Panc1 (cell line): ENCODE measurements at regions of chr5 and their contacts with region 1.

Region 1: GRCh38 chr5:174327317-174328236 is 282.1 kb downstream of the NSG2 start:
- DNase-seq: peak; percentile 30
- ATAC-seq: peak; percentile 91
- H3K4me3 ChIP-seq: no peak overlapping the region
- H3K27ac ChIP-seq: no peak overlapping the region
- H3K4me1 ChIP-seq: no peaks in the 10 kb centered on the region
- H3K27me3 ChIP-seq: peaks cover 24% of the 10 kb centered on the region
- CTCF ChIP-seq: peak; percentile 95

Region 2: DNA sequence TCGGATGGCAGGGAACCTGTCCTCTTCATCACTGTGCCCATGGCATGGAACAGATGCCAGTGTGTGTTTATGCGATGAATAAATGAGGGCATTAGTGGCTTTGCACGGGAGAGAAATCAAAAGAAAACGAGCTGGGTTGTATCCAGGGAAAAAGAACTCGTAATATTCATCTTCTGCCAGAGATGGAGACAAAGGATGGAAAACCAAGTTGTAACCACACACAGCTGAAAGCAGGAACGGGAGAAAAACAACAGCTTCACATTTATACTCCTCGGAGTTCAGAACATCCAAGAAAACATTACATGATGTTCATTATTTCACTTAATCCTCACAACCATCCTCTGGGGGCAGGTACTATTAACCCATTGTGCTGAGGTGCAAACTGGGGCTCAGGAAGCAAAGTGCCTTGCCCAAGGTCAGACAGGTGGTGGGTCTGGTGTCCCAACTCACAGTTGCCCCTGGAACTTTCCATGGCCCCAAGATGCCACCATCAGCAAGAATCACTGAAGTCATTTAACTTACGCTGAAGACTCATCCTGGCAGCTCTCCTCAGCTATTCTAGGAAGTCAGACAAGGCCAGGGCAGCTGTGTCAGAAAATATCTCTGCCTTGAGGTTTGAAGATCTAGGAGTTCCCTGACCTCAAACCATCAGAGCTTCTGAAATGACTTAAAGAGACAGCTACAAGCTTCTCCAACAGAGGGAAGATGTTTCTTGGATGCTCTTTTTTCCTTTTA is 31.7 kb before region 1 on chr5:
- CTCF ChIA-PET with region 1: no interaction called
- POLR2A ChIA-PET with region 1: no interaction called
- in situ Hi-C with region 1: no loop called
- intact Hi-C with region 1: no loop called
- DNase-seq: no peak
- ATAC-seq: no peak
- H3K4me3 ChIP-seq: no peak overlapping the region
- H3K27ac ChIP-seq: no peak overlapping the region
- H3K4me1 ChIP-seq: no peaks in the 10 kb centered on the region
- H3K27me3 ChIP-seq: no peaks in the 10 kb centered on the region; the same call in 1 of the 2 replicates
- CTCF ChIP-seq: no peak

Region 3: GRCh38 chr5:174735498-174736330 is 408.1 kb after region 1 on chr5:
- CTCF ChIA-PET with region 1: no interaction called
- POLR2A ChIA-PET with region 1: no interaction called
- in situ Hi-C with region 1: no loop called
- intact Hi-C with region 1: loop called (anchors 1 kb)
- DNase-seq: no peak
- ATAC-seq: peak; percentile 93
- H3K4me3 ChIP-seq: peak overlapping the region; percentile 52 to 89
- H3K27ac ChIP-seq: no peak overlapping the region
- H3K4me1 ChIP-seq: peaks cover 20% of the 10 kb centered on the region
- H3K27me3 ChIP-seq: peaks cover 3% of the 10 kb centered on the region; the same call in 1 of the 2 replicates
- CTCF ChIP-seq: peak; percentile 87

Region 4: DNA sequence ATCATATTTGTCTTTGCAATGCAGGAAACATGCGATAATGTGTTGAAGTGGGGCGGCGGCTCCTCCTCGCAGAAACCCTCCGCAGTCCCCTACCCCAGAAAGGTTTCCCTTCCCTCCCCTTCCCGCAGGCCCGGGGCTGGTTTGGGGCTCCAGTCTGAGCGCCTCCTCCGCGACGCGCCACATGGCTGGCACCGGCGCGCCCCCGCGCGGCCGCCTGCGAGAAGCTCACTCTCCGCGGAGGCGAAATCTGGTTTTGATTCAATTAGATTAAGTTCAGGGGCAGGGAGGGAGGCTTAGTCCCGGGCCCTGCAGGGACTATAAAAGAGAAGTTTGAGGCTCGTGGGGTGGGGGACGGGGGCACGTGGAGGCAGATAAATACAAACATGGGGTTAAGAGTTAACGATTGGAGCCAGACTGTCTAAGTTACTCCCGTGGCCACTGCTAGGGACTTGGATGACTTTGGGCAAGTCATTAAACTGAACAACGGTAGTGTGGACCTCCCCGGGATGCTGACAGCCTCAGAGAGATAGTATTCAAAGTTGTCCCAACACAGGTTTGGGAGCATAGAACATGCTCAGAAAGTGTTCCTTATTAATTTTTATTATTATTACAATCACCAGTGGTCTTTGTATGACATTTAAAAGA is 466.2 kb after region 1 on chr5:
- CTCF ChIA-PET with region 1: no interaction called
- POLR2A ChIA-PET with region 1: no interaction called
- in situ Hi-C with region 1: no loop called
- intact Hi-C with region 1: loop called (anchors 2 kb)
- DNase-seq: peak; percentile 17
- ATAC-seq: peak; percentile 96
- H3K4me3 ChIP-seq: peak overlapping the region in 1 of 2 experiments; percentile 35; a peak in 2 of 4 replicates
- H3K27ac ChIP-seq: no peak overlapping the region
- H3K4me1 ChIP-seq: no peaks in the 10 kb centered on the region; the same call in 1 of the 2 replicates
- H3K27me3 ChIP-seq: peaks cover 5% of the 10 kb centered on the region; the same call in 1 of the 2 replicates
- CTCF ChIP-seq: peak; percentile 98

Region 5: DNA sequence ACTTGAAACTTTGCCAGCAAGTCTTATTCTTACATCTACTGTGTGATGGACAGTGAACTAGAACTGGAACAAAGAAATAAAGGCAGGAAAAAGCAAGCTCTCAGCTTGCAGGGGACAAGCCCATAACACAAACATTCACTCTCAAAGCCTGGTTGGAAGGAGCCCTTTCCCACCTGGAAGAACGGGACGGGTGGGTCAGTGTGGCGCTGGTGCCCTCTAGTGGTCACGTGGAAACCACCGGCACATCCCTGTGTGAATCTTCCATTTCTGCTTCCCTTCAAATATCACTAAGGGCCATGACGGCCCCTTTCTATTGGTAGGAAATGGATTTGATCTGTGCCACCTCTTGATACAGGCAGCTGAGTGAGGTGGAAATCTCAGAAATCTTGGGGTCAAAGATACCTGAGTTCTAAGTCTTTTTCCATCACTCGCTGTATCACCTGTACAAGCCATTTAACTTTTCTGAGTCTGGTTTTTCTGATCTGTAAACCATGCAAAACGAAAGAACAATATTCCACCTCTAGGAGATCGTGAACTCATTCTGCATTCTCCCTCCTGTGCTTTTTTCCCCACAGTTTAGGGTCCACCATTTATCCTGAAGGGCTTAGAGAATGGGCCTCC is 608.4 kb after region 1 on chr5:
- CTCF ChIA-PET with region 1: no interaction called
- POLR2A ChIA-PET with region 1: no interaction called
- in situ Hi-C with region 1: no loop called
- intact Hi-C with region 1: loop called (anchors 5 kb)
- DNase-seq: peak; percentile 51
- ATAC-seq: peak; percentile 92
- H3K4me3 ChIP-seq: no peak overlapping the region
- H3K27ac ChIP-seq: no peak overlapping the region
- H3K4me1 ChIP-seq: no peaks in the 10 kb centered on the region
- H3K27me3 ChIP-seq: peaks cover 2% of the 10 kb centered on the region; the same call in 1 of the 2 replicates
- CTCF ChIP-seq: peak; percentile 96